ENCODE measurements at regions of chr3 and their contacts with region 1.

Region 1: DNA sequence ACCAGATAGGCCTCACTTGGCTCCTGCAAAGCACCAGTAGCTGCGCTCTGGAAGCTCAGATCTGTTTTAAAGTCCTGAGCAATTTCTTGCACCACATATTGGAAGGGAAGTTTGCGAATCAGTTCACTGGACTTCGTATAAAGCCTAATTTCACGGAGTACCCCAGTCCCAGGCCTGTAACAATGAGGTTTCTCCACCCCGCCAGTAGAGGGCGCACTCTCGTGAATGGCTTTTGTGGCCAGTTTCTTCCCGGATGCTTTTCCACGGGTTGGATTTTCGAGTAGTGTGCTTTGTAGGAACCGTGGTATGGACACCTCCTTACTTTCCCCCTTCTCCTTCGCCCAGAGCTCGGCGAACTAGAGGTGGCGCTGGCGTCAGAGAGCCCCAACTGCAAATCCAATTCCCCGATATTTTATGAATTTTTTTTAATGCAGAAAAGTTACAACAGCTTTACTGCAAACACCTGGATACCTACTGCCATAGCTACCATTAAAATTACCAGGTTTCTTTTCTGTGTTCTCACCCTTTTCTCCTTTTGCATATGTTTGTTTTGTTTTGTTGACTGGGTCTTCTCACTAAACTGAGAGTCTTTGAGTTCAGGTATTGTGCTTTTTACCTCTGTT is 13.3 kb downstream of the RARB start:
- DNase-seq: peak; percentile 19
- CTCF ChIP-seq: peak; percentile 58

Region 2: GRCh38 chr3:25103391-25103790 is 338.0 kb before region 1 on chr3:
- CTCF ChIA-PET with region 1: no interaction called
- POLR2A ChIA-PET with region 1: no interaction called
- DNase-seq: no peak
- CTCF ChIP-seq: no peak

Region 3: DNA sequence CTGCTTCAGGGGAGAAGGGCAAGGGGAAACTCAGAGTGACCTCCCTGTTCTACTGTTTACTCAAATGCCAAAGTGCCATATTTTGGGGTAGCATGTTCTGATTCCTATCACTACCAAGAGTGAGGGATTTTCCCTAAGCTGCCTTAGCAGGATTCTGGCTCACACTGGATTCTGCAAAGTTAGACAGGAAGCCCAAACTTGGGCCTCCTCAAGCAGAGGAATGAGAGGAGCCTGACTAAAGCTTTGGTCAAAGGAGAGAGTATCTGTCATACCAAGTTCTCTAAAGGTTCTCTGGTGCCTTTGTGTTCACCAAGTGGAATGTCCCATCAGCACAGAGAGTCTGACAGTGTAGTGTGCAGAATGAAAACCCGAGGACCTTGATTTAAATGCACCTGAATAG is 22.1 kb before region 1 on chr3:
- CTCF ChIA-PET with region 1: no interaction called
- POLR2A ChIA-PET with region 1: no interaction called
- DNase-seq: no peak
- CTCF ChIP-seq: no peak

Region 4: GRCh38 chr3:25465266-25465836 is 24.0 kb after region 1 on chr3:
- CTCF ChIA-PET with region 1: interaction called, 10 read pairs
- POLR2A ChIA-PET with region 1: no interaction called
- DNase-seq: no peak
- CTCF ChIP-seq: no peak